Right lobe of liver (tissue), 6 donors: ENCODE measurements at regions of chr7 and their contacts with region 1.

Region 1: DNA sequence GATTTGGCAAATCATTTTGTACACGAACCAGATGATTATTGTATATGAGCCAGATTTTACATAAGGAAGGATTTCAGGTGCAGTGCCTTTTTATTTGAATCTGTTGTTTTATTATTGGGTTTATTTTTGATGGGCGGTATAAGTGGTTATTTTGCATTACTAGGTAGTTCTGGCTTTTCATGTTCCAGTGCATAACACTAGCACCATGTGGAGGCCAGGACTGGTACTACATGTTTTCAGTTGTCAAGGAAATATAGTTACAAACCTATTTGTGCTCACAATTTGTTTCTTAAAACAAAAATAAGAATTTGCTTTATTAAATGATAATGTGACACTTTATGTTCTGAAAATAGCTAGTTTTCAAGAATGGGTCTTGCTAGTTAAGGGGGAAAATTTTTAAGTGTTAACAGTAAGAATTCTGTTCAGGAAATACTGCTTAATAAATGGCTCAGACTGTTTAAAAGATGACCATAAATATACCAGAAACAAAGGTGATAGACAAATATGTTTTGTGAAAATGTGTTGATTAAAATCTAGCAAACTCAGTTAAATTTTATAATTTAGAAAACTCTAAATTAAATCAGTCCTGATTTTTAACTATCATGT is 7.1 kb upstream of the SEMA3E start:
- DNase-seq: no peak
- ATAC-seq: peak; percentile 60 to 77 (median 71)
- H3K4me3 ChIP-seq: no peak overlapping the region
- H3K27ac ChIP-seq: no peak overlapping the region
- H3K4me1 ChIP-seq: no peaks in the 10 kb centered on the region
- H3K27me3 ChIP-seq: no peaks in the 10 kb centered on the region
- CTCF ChIP-seq: peak; percentile 61 to 79 (median 64)
- POLR2A ChIP-seq: no peak

Region 2: GRCh38 chr7:83410989-83411591 is 245.0 kb before region 1 on chr7:
- intact Hi-C with region 1: loop called in 1 of 2 experiments (anchors 10 kb)
- DNase-seq: no peak
- ATAC-seq: peak; percentile 46 to 68 (median 52)
- H3K4me3 ChIP-seq: no peak overlapping the region
- H3K27ac ChIP-seq: no peak overlapping the region
- H3K4me1 ChIP-seq: no peaks in the 10 kb centered on the region
- H3K27me3 ChIP-seq: no peaks in the 10 kb centered on the region
- CTCF ChIP-seq: peak; percentile 57 to 75 (median 66)
- POLR2A ChIP-seq: no peak